ENCODE measurements at regions of chr5 and their contacts with region 1.

Region 1: DNA sequence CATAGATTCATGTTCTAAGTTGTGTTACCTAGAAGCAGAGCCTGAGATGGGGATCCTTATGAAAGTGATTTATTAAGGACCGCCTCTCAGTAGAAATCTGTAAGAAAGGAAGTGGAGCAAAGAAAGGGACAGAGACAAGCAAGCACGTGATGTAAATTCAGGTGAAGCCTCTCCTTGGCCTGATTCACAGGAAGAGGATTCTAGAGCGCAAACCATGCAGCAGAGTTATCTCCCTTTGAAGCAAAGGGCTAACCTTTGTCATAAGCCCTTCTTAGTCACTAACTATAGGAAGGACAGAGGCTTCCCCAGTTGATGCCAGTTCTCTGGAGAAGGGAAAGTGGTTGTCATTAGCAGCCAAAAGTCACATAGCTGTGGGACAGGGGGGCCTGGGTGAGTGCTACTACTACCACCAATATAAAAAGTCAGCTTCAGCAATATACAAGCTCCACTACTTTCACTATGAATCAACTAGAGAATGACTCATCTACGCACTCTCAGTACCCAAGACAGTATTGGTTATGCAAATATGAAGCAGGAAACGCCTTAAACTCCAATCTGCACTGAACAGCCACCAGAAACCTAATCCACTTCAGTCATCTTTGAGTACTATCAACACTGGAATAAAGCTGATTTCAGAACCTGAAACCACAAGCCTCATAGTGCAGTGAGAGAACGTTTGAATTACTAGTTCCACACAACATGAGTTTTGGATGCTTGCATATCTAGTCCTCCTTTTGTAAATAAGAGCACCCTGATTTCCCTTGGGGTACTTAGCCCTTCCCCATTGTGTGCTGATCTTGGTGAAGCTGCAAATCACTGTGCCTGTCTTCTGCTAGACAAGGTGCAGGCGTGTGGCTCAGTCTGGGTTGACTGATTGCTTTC is 162.7 kb downstream of the ZNF608 start:
- DNase-seq: peak; percentile 65
- ATAC-seq: no peak
- H3K4me3 ChIP-seq: no peak overlapping the region
- H3K27ac ChIP-seq: no peak overlapping the region
- H3K4me1 ChIP-seq: peaks cover 58% of the 10 kb centered on the region
- H3K27me3 ChIP-seq: no peaks in the 10 kb centered on the region
- CTCF ChIP-seq: no peak
- EP300 ChIP-seq: 0 out of 4 replicates have a peak, but pooled peaks of 1 of the 2 experiments have one; percentile 8
- POLR2A ChIP-seq: no peak
- RAD21 ChIP-seq: no peak

Region 2: GRCh38 chr5:124176691-124177090 is 407.0 kb before region 1 on chr5:
- CTCF ChIA-PET with region 1: no interaction called
- POLR2A ChIA-PET with region 1: no interaction called
- in situ Hi-C with region 1: no loop called
- intact Hi-C with region 1: no loop called
- DNase-seq: no peak
- ATAC-seq: no peak
- H3K4me3 ChIP-seq: no peak overlapping the region
- H3K27ac ChIP-seq: no peak overlapping the region
- H3K4me1 ChIP-seq: no peaks in the 10 kb centered on the region
- H3K27me3 ChIP-seq: no peaks in the 10 kb centered on the region
- CTCF ChIP-seq: no peak
- EP300 ChIP-seq: no peak
- POLR2A ChIP-seq: no peak
- RAD21 ChIP-seq: no peak

Region 3: DNA sequence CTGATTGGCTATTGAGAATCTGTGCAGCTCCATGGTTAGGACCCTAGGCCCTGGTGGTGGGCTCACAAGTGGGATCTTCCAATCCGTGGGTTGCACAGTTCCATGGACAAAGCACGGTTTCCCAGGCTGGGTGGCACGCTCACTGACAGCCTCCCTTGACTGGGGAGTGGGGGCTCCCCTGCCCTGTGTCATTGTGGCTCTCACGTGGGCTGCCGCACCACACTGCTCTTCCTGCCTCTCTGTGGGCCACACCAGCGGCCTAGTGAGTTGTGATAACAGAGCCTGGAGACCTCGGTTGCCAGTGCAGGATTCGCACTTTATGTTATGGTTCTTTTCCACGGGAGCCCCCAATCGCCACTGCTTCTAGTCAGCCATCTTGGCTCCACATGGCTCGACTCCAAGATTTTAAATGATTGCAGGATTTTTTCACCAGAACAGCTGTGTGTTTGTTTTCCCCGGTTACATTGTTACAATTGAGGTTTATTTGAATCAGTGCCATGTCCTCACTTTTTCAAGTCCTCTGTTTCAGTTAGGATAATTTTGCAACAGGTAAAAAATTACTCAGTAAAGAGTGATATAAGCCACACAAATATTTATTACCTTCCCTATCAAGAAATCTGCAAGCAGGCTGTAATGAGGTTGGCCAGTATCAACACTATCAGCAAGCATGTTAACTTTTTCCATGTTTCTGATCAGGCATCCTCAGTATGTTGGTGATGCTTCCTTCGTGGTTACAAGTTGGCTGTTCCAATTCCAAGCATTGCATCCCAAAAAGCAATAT is 91.1 kb before region 1 on chr5:
- CTCF ChIA-PET with region 1: no interaction called
- POLR2A ChIA-PET with region 1: no interaction called
- in situ Hi-C with region 1: no loop called
- intact Hi-C with region 1: no loop called
- DNase-seq: no peak
- ATAC-seq: no peak
- H3K4me3 ChIP-seq: no peak overlapping the region
- H3K27ac ChIP-seq: no peak overlapping the region
- H3K4me1 ChIP-seq: no peaks in the 10 kb centered on the region
- H3K27me3 ChIP-seq: no peaks in the 10 kb centered on the region; a peak in 1 of 5 replicates
- CTCF ChIP-seq: no peak
- EP300 ChIP-seq: no peak
- POLR2A ChIP-seq: no peak
- RAD21 ChIP-seq: no peak

Region 4: DNA sequence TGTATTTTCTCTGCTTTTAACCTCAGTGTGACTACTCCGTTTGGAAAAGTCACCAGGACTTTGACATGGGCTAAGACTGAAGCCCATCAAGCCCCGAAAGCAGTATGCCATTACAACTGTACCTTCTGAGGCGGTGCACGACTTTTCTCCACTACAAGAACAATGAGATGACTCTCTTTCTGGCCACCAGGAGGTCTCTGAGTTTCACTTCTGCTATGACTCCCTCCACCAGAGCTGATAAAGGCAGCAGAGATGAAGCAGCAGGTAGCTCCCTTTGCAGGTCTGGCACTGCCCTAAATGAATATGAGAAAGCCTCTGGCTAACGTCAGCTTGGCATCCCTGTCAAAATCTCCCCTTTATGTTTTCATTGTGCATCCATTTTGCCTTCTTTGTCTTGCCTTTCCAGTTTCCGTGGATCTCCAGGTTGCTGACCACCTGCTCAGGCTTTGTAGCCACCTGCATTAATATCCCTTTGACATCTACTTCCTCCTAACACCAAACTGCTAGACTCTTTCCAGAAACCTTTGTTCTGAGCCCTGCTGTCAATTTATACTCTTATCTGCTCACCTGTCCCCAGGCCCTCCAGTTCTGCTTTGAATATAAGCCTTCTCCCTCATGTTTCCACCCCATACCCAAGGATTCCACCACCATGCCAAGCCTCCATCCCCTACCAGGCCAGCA is 59.0 kb before region 1 on chr5:
- CTCF ChIA-PET with region 1: no interaction called
- POLR2A ChIA-PET with region 1: no interaction called
- in situ Hi-C with region 1: no loop called
- intact Hi-C with region 1: loop called (anchors 5 kb)
- DNase-seq: peak; percentile 31
- ATAC-seq: peak; percentile 77
- H3K4me3 ChIP-seq: no peak overlapping the region
- H3K27ac ChIP-seq: no peak overlapping the region
- H3K4me1 ChIP-seq: peaks cover 30% of the 10 kb centered on the region
- H3K27me3 ChIP-seq: peaks cover 0 to 3% of the 10 kb centered on the region in 2 experiments; a peak in 1 of 5 replicates
- CTCF ChIP-seq: peak; percentile 58
- EP300 ChIP-seq: no peak
- POLR2A ChIP-seq: no peak
- RAD21 ChIP-seq: peak; percentile 44; the same call in 1 of the 2 replicates

Region 5: DNA sequence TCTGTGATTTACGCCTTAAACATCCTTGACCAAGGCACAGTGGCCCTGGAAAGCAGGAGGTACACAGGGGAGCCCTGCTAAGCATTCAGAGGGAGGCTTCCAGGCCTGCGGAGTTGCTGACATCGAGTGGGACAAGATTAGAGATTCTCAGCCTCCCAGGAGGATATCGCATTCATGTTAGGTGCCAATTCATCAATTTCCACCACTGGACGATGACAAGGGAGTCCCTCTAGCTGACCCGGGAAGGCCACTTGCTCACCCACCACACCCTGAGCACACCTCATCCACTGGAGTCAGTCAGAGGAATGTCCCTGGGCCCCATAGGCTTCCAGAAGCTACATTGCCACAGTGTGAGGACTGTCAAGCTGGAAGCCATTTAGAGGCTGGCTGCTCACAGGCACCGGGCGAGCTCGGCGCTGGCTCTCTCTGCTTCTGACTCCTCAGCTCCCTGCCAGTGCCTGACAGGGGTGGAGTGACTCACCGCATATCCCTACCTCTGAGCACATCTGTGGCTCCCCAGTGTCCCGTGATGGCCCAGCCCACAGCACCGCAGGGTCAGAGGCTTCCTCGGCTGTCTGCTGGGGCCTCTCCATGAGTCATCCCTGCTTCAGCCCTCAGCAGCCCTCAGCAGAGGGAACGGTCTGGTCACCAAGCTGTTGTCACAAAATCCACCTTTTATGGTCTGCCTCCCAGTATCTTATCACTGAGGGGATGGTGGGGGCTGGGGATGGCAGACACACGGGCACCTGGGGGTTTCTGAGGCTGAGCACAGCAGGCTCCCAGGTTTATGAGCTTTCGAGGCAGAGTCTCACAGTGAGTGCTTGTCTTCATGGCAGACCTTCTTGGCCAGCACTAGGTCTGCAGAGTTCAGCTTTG is 45.2 kb after region 1 on chr5:
- CTCF ChIA-PET with region 1: no interaction called
- POLR2A ChIA-PET with region 1: interaction called, 5 read pairs
- in situ Hi-C with region 1: no loop called
- intact Hi-C with region 1: loop called (anchors 1 kb)
- DNase-seq: peak; percentile 84
- ATAC-seq: peak; percentile 98
- H3K4me3 ChIP-seq: peak overlapping the region in 2 of 3 experiments; percentile 12 to 58; a peak in 4 of 6 replicates
- H3K27ac ChIP-seq: no peak overlapping the region
- H3K4me1 ChIP-seq: peaks cover 45% of the 10 kb centered on the region
- H3K27me3 ChIP-seq: no peaks in the 10 kb centered on the region
- CTCF ChIP-seq: no peak
- EP300 ChIP-seq: peak in 1 of 2 experiments; percentile 45; a peak in 1 of 4 replicates
- POLR2A ChIP-seq: no peak
- RAD21 ChIP-seq: no peak

Region 6: DNA sequence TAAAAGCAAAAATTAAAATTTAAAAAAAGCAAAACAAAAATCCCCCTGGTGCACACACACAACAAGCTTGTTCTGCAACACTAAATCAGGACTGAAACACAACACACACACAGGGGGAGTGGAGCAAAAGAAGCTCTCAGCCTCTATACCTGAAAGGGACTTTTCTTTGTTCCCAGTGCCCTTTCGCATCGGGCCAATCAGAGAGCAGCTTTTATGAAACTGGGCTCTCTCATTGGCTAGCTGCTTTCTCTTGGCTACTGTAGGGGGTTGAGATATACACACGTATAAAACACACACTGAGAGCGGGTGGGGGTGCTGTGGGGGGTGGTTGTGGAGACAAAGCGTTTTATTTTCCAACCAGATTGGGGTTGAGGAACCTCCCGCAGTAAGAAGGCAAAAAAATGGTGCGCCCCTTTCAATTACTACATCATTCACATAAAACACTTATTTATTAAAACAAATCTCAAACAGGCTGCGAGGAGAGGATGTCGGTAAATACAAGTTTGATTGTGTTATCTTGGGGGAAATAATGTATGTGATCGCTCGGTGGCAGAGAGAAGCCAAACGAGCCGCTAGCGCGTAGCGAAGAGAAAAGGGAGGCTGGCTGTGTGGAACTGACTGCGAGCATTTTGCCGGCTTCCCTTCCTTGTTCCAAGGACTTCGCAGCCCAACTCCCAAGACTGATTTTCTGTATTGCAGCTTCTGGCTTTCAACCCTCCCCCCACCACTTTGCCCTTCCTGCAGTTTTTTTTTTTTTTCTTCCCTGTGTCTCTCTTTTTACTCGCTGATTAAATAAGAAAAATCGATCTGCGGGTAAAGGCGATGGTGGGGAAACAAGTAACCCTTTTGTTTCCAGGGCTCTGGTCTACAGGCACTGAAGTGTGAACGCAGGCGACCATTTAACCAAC is 165.2 kb after region 1 on chr5:
- CTCF ChIA-PET with region 1: no interaction called
- POLR2A ChIA-PET with region 1: interaction called, 4 read pairs
- in situ Hi-C with region 1: no loop called
- intact Hi-C with region 1: loop called (anchors 1 kb)
- DNase-seq: peak; percentile 81
- ATAC-seq: peak; percentile 93
- H3K4me3 ChIP-seq: peak overlapping the region; percentile 49 to 73 (median 68)
- H3K27ac ChIP-seq: peak overlapping the region; percentile 71
- H3K4me1 ChIP-seq: peaks cover 29% of the 10 kb centered on the region
- H3K27me3 ChIP-seq: peaks cover 0 to 27% of the 10 kb centered on the region in 2 experiments; a peak in 3 of 5 replicates
- CTCF ChIP-seq: no peak
- EP300 ChIP-seq: peak in 1 of 2 experiments; percentile 87; a peak in 2 of 4 replicates
- POLR2A ChIP-seq: peak in 1 of 2 experiments; percentile 11; a peak in 1 of 4 replicates
- RAD21 ChIP-seq: no peak

Region 7: DNA sequence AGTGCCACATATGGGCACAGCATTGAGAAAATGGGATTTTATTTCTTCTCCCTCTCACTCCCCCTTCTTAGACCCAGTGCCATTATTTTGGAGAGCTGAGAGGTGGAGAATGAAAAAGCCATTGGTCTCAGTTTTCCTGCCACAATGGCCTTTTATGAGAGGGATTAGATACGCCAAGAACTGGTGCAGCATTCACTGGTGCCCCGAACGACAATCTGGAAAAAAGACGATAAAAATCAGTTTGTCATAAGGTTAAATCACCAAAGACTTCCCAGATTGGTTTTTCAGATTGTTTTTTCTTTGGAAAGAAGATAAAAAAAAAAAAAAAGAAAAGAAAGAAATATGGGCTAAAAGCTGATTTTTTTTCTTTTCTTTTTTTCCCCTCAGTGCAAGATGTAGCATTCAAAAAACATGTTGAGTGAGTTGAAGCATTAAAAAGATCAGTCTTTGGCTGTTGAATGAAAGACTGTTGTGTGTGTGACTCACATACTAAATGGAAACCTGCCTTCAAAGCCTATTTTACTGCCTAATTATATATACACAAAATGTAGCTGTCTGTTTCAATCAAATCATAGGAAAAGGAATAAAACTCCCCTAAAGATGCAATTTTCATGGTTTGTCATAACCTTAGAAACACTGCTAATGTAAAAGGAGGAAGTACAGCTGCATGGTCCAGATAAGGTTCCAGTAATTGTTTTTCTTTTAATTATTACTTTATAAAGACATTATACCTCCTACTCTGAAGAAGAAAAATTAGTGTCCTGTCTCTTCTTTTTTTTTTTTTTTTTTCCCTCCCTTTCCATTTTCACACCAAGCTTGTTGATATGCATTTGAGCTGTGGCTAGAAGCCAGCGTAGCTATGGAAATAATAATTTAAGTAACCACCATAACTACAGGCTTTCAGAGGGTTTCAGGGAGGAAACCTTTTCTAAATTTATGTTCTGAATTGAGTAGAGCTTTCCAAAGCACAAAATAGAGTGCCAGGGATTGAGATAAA is 189.9 kb after region 1 on chr5:
- CTCF ChIA-PET with region 1: no interaction called
- POLR2A ChIA-PET with region 1: no interaction called
- in situ Hi-C with region 1: no loop called
- intact Hi-C with region 1: no loop called
- DNase-seq: no peak
- ATAC-seq: no peak
- H3K4me3 ChIP-seq: no peak overlapping the region
- H3K27ac ChIP-seq: no peak overlapping the region
- H3K4me1 ChIP-seq: no peaks in the 10 kb centered on the region
- H3K27me3 ChIP-seq: 0 out of 5 replicates have a peak, but pooled peaks cover 0 to 4% of the 10 kb centered on the region in 2 experiments
- CTCF ChIP-seq: no peak
- EP300 ChIP-seq: no peak
- POLR2A ChIP-seq: no peak
- RAD21 ChIP-seq: no peak

Region 8: GRCh38 chr5:124902097-124902821 is 318.5 kb after region 1 on chr5:
- CTCF ChIA-PET with region 1: no interaction called
- POLR2A ChIA-PET with region 1: no interaction called
- in situ Hi-C with region 1: no loop called
- intact Hi-C with region 1: loop called (anchors 5 kb)
- DNase-seq: no peak
- ATAC-seq: no peak
- H3K4me3 ChIP-seq: no peak overlapping the region
- H3K27ac ChIP-seq: no peak overlapping the region
- H3K4me1 ChIP-seq: peaks cover 17% of the 10 kb centered on the region
- H3K27me3 ChIP-seq: no peaks in the 10 kb centered on the region
- CTCF ChIP-seq: no peak
- EP300 ChIP-seq: no peak
- POLR2A ChIP-seq: no peak
- RAD21 ChIP-seq: no peak